T-cell (primary cell): ENCODE measurements at regions of chr17 and their contacts with region 1.

Region 1: DNA sequence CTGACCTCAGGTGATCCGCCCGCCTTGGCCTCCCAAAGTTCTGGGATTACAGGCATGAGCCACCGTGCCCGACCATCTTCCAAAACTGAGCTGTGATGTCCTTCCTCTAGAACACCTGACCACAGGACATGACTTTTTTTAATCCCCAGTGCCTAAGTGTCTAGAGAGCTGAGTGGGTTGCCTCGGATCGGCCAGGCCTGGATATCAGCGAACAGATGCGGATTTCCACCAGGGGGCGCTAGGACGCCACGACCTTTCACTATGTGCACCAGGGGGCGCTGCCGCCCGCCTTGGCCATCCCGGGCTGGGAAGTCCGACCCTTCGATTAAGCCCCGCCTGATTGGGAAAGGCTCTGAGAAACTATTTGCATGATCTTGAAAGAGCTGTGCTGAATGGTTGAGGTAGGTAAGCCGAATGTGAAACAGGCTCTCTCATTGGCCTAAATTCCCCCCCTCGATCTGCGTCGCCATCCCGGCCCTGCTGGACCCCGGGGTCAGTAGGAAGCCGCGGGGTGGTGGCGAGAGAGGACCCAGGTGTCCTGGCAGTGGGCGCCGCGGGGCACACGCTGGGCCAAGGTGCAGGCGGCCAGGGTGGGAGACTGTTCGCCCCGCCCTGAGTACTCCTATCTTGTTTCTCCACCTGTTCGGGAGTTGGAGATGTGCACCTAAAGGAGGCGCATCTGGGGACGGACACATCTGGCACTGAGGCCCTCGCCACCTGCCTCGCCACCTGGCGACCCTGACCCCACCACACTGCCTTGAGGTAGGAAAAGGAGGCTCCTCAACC is at the start of gene ACBD4:
- DNase-seq: peak; percentile 92 to 99 (median 96)
- ATAC-seq: peak; percentile 84 to 86 (median 85)
- H3K4me3 ChIP-seq: peak within 1 kb of the TSS; percentile 64 to 80
- H3K4me3 Mint-ChIP-seq: peak within 1 kb of the TSS; percentile 84 to 88 (median 84)
- H3K27ac ChIP-seq: peak within 1 kb of the TSS; percentile 40
- H3K27ac Mint-ChIP-seq: peak within 1 kb of the TSS; percentile 78 to 86
- H3K4me1 ChIP-seq: peaks cover 0 to 33% of the 10 kb centered on the region in 2 experiments
- H3K4me1 Mint-ChIP-seq: peaks cover 17 to 23% (median 22%) of the 10 kb centered on the region in 3 donors
- H3K27me3 ChIP-seq: peaks cover 0 to 15% of the 10 kb centered on the region in 2 experiments
- H3K27me3 Mint-ChIP-seq: no peaks in the 10 kb centered on the region
- total RNA-seq, gene ACBD4: 28.4 to 48.5 (median 38.9) TPM

Region 2: GRCh38 chr17:45110668-45111611 is 24.4 kb before region 1 on chr17:
- CTCF ChIA-PET with region 1: no interaction called
- POLR2A ChIA-PET with region 1: no interaction called
- DNase-seq: no peak
- ATAC-seq: no peak
- H3K4me3 ChIP-seq: no peak overlapping the region
- H3K4me3 Mint-ChIP-seq: no peak overlapping the region
- H3K27ac ChIP-seq: no peak overlapping the region
- H3K27ac Mint-ChIP-seq: no peak overlapping the region
- H3K4me1 ChIP-seq: no peaks in the 10 kb centered on the region
- H3K4me1 Mint-ChIP-seq: no peaks in the 10 kb centered on the region
- H3K27me3 ChIP-seq: peaks cover 0 to 3% of the 10 kb centered on the region in 2 experiments
- H3K27me3 Mint-ChIP-seq: no peaks in the 10 kb centered on the region

Region 3: GRCh38 chr17:45148183-45149036 is 13.0 kb after region 1 on chr17 and contains the start of gene HEXIM1:
- CTCF ChIA-PET with region 1: interaction called, 33 to 277 read pairs
- POLR2A ChIA-PET with region 1: interaction called, 4 to 18 read pairs
- DNase-seq: peak; percentile 97 to 100 (median 99)
- ATAC-seq: peak; percentile 77 to 83 (median 81)
- H3K4me3 ChIP-seq: peak within 1 kb of the TSS; percentile 76 to 99
- H3K4me3 Mint-ChIP-seq: peak within 1 kb of the TSS; percentile 93 to 100 (median 97)
- H3K27ac ChIP-seq: peak within 1 kb of the TSS; percentile 97
- H3K27ac Mint-ChIP-seq: peak within 1 kb of the TSS; percentile 99 to 100
- H3K4me1 ChIP-seq: peaks cover 31 to 73% of the 10 kb centered on the region in 2 experiments
- H3K4me1 Mint-ChIP-seq: peaks cover 59 to 67% (median 61%) of the 10 kb centered on the region in 3 donors
- H3K27me3 ChIP-seq: no peaks in the 10 kb centered on the region
- H3K27me3 Mint-ChIP-seq: peaks cover 0 to 2% of the 10 kb centered on the region in 2 donors
- total RNA-seq, gene HEXIM1: 32.3 to 55.9 (median 34.5) TPM

Region 4: DNA sequence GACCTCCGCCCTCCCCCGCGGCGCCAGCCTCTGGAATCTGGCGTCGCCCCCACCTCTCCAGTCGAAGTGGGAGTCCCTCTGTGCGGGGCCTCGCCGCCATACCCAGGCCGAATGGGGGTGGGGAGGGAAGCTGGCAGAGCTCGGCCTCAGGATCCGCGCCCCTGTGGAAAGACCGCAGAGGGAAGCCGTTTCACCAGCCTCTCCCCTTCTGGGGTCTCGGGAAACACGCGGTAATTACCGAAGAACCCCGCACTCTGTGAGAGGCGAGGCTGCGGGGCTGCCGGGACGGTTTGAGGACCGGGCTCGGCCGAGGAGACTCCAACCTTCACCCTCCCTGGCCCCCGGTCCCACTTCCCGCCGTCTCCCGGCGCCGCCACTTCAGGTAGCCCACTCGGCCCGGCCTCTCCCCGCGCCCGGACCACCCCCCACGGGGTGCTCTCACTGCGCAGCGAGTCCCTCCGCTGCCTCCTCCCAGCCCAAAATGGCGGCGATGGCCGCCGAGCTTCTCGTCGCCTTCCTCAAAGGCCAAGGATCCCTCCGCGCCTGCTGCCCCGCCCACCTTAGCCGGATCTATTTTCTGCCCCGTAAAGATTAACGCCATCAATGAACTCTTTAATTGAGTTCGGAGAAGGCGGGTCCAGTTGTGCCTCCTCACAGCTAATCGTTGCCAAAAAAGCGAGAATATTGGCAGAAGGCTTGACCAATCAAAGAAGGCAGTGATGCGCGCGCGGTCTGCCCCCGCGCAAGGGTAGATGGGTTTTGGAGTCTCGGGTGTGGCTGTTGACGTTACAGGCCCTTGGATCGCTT is 25.8 kb after region 1 on chr17:
- CTCF ChIA-PET with region 1: interaction called, 4 to 42 read pairs
- POLR2A ChIA-PET with region 1: no interaction called
- DNase-seq: peak; percentile 92 to 99 (median 98)
- ATAC-seq: peak; percentile 94 to 95 (median 94)
- H3K4me3 ChIP-seq: peak overlapping the region; percentile 90 to 94
- H3K4me3 Mint-ChIP-seq: peak overlapping the region; percentile 95 to 99 (median 96)
- H3K27ac ChIP-seq: peak overlapping the region; percentile 100
- H3K27ac Mint-ChIP-seq: peak overlapping the region; percentile 99
- H3K4me1 ChIP-seq: peaks cover 16 to 32% of the 10 kb centered on the region in 2 experiments
- H3K4me1 Mint-ChIP-seq: peaks cover 37 to 46% (median 44%) of the 10 kb centered on the region in 3 donors
- H3K27me3 ChIP-seq: no peaks in the 10 kb centered on the region
- H3K27me3 Mint-ChIP-seq: no peaks in the 10 kb centered on the region

Region 5: GRCh38 chr17:45197555-45198334 is 62.4 kb after region 1 on chr17:
- CTCF ChIA-PET with region 1: interaction called, 32 to 144 read pairs
- POLR2A ChIA-PET with region 1: interaction called in 1 of 2 experiments, 8 read pairs
- DNase-seq: peak; percentile 56 to 92 (median 81)
- ATAC-seq: peak; percentile 98 to 99 (median 99)
- H3K4me3 ChIP-seq: no peak overlapping the region
- H3K4me3 Mint-ChIP-seq: no peak overlapping the region
- H3K27ac ChIP-seq: no peak overlapping the region
- H3K27ac Mint-ChIP-seq: no peak overlapping the region
- H3K4me1 ChIP-seq: peaks cover 0 to 7% of the 10 kb centered on the region in 2 experiments
- H3K4me1 Mint-ChIP-seq: peaks cover 0 to 5% (median 4%) of the 10 kb centered on the region in 3 donors
- H3K27me3 ChIP-seq: no peaks in the 10 kb centered on the region
- H3K27me3 Mint-ChIP-seq: no peaks in the 10 kb centered on the region